ENCODE measurements at regions of chr5 and their contacts with region 1.

Region 1: GRCh38 chr5:36079200-36079761 is 12.6 kb upstream of the UGT3A2 start:
- DNase-seq: peak; percentile 42 to 63 (median 54)
- H3K4me3 ChIP-seq: no peak overlapping the region
- H3K27ac ChIP-seq: no peak overlapping the region
- H3K4me1 ChIP-seq: no peaks in the 10 kb centered on the region
- H3K27me3 ChIP-seq: peaks cover 0 to 2% (median 0%) of the 10 kb centered on the region in 5 experiments

Region 2: GRCh38 chr5:35762368-35762767 is 316.9 kb before region 1 on chr5:
- CTCF ChIA-PET with region 1: no interaction called
- POLR2A ChIA-PET with region 1: no interaction called
- DNase-seq: no peak
- H3K4me3 ChIP-seq: no peak overlapping the region
- H3K27ac ChIP-seq: no peak overlapping the region
- H3K4me1 ChIP-seq: no peaks in the 10 kb centered on the region
- H3K27me3 ChIP-seq: no peaks in the 10 kb centered on the region

Region 3: DNA sequence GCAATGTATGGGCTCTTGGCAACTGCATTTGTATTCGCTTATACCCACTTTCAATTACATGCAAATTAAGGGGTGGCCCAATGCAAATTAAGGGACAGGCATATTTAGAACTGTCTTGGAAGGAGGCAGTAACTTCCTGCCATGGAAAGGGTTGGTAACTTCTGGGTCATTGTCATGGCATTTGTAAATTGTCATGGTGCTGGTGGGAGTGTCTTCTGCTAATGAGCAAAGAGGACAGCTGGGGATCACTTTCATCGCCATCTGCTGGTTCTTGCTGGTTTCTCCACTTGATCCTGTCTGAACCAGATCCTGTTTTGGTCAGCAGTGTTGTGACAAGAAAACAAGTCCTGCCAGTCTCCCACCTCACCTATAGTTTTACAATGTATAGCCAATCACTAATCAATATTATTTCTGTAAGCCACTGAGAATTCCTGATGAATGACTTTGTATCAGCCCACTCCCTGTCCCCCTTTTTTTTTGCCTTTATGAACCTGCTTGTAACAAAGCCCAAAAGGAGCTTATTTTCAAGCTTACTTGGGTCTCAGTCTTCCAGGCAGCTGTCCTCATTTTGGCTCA is 10.8 kb after region 1 on chr5:
- CTCF ChIA-PET with region 1: interaction called, 31 read pairs
- POLR2A ChIA-PET with region 1: no interaction called
- DNase-seq: peak; percentile 30 to 72 (median 70)
- H3K4me3 ChIP-seq: no peak overlapping the region
- H3K27ac ChIP-seq: no peak overlapping the region
- H3K4me1 ChIP-seq: no peaks in the 10 kb centered on the region
- H3K27me3 ChIP-seq: no peaks in the 10 kb centered on the region

Measured in common myeloid progenitor, CD34-positive (primary cell).